ENCODE measurements at regions of chr18 and their contacts with region 1.

Region 1: DNA sequence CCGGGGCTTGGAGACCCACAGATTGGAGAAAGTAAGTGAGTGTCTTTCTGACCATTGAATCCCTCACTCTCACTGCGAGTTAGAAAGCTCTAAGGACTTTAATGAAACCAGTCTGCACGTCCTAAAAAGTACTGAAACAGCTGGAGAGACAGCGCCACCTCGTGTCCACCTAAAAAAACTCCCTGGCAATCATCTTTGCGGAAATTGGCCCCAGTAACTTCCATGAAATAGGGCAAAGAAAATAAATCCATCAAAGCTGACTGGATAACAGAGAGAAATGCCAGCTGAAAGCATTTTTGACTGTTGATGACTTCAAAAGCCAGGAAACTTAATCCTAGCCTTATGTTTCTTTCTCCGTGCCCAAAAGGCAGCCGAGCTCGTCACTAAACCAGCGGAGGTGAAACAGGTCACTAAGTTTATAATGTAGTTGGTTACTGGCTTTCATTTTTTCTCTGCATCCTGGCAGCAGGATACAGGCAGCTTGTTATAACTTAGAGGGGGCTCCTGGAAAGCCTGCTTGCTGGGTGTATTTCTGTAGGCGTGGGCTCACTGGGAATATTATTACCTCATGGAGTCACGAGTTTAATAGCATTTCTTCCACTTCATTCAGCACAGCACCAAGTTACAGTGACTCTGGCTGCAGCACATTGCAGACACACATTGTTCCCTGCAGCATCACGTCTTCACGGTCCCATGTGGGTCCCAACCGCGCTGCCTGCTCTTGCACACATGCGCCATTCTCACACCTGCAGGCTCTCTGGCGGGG is 266.5 kb downstream of the HRH4 start:
- DNase-seq: peak; percentile 41
- ATAC-seq: peak; percentile 77

Region 2: GRCh38 chr18:24600076-24600654 is 126.7 kb before region 1 on chr18:
- intact Hi-C with region 1: loop called (anchors 5 kb)
- DNase-seq: no peak
- ATAC-seq: peak; percentile 23

Measured in left ventricle myocardium superior (tissue), 1 donor.